ENCODE measurements at regions of chr5 and their contacts with region 1.

Region 1: GRCh38 chr5:40361378-40361777 is 318.3 kb upstream of the PTGER4 start:
- DNase-seq: no peak

Region 2: DNA sequence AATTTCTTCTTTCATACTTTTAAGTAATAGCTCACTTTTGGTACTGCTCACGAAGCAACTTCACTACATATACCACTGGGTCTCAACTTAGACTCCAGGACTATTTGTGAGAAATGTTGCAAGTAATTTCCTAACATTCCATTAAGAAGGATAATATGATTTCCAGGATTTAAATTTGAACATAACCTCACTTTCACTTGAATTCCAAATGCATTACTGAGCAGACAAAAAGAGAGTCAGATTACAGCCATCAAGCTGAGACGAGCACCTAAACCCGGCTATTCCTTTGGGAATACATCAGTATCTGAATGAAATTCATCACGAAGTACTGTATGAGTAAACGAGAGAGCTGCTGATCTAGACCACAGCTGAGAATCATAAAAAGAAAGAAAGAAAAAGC is 1852.2 kb before region 1 on chr5:
- intact Hi-C with region 1: loop called in 1 of 2 experiments (anchors 5 kb)
- DNase-seq: no peak

Region 3: GRCh38 chr5:39194466-39195136 is 1166.8 kb before region 1 on chr5:
- intact Hi-C with region 1: loop called in 1 of 2 experiments (anchors 5 kb)
- DNase-seq: no peak

Measured in posterior vena cava (tissue), 2 donors.